ENCODE measurements at regions of chr6 and their contacts with region 1.

Region 1: DNA sequence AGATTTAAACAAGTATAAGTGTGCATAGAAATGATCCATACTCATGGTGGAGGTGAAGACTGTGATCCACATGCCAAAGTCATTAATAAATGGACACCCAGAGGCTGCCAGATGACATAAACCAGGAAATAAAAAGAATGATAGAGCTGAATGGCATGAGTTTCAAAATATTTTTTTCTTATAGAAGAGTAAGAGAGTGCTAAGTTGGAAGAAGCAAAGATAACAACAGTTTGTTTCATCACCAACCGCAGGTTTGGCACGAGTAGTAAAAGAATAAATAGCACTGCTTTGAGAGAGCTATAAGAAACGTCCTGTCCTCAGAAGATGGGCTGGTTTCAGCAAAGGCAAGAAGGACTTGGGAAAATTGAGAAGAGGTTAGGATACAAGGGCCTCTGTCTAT is 246.9 kb downstream of the UBE3D start:
- DNase-seq: no peak
- H3K4me3 ChIP-seq: no peak overlapping the region
- H3K27ac ChIP-seq: no peak overlapping the region
- H3K4me1 ChIP-seq: no peaks in the 10 kb centered on the region
- H3K27me3 ChIP-seq: no peaks in the 10 kb centered on the region
- CTCF ChIP-seq: no peak
- EP300 ChIP-seq: no peak
- POLR2A ChIP-seq: no peak

Region 2: DNA sequence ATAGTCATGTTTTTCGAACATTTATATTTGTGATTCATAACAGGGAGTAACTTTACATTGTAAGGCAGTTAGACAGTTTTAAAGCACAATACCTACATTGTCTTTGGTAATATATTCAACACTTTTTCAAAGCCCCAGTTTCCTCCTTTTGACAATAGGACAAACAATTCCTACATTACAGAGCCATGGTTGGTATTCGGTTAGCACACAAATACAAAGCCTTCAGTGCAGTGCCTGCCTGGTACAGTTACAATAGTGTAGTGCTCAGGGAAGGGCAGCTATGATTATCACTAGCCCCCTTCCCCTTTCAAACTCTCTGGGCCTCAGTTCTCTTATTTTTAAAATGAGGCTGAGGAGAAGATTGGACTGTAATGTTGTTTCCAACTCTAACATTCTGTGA is 247.3 kb before region 1 on chr6:
- intact Hi-C with region 1: no loop called
- DNase-seq: no peak
- H3K4me3 ChIP-seq: no peak overlapping the region
- H3K27ac ChIP-seq: no peak overlapping the region
- H3K4me1 ChIP-seq: no peaks in the 10 kb centered on the region
- H3K27me3 ChIP-seq: no peaks in the 10 kb centered on the region
- CTCF ChIP-seq: no peak
- EP300 ChIP-seq: no peak
- POLR2A ChIP-seq: no peak

Region 3: GRCh38 chr6:82750556-82750955 is 68.2 kb before region 1 on chr6:
- intact Hi-C with region 1: no loop called
- DNase-seq: no peak
- H3K4me3 ChIP-seq: no peak overlapping the region
- H3K27ac ChIP-seq: no peak overlapping the region
- H3K4me1 ChIP-seq: no peaks in the 10 kb centered on the region
- H3K27me3 ChIP-seq: no peaks in the 10 kb centered on the region
- CTCF ChIP-seq: no peak
- EP300 ChIP-seq: no peak
- POLR2A ChIP-seq: no peak

Region 4: DNA sequence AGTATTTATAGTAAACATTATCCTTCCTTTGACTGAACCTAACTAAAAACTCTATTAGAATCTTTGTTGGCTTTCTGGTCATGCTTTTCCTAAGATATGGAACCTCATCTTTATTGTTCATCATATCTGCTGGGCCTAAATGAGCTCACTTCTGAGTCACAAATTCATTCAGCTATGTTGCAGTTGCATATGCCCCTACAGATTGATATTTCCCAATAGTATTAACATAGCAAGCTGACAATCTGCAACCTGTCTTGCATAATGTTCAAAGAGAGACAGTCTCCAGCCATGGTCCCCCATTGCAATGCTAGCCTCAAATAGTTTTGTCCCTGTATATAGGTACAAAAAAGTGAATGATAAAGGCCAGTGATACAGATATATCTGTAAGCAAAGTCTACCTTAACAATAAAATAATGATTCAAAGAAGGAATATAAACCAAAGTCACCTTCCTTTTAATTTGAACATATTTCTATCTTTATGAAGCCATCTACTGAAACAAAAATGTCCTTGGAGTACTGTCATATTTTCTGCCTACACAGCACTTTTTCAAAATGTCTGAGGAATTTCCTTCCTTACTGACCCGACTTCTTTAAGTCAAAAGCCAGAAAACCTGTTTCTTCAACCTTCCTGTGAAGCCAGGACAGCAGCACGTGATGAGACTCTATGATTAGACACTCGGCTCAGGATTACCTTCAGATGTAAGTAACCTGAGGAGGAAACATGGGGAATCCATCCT is 106.2 kb after region 1 on chr6:
- intact Hi-C with region 1: loop called in 1 of 4 experiments (anchors 5 kb)
- DNase-seq: no peak
- H3K4me3 ChIP-seq: no peak overlapping the region
- H3K27ac ChIP-seq: no peak overlapping the region
- H3K4me1 ChIP-seq: no peaks in the 10 kb centered on the region
- H3K27me3 ChIP-seq: no peaks in the 10 kb centered on the region
- CTCF ChIP-seq: no peak
- EP300 ChIP-seq: no peak
- POLR2A ChIP-seq: no peak